Activated CD4-positive, alpha-beta memory T cell treated with anti-CD3 and anti-CD28 coated beads for 36 hours (primary cell): ENCODE measurements at regions of chr11 and their contacts with region 1.

Region 1: GRCh38 chr11:33161120-33162005 is at the start of gene CSTF3:
- DNase-seq: peak; percentile 99
- H3K4me3 Mint-ChIP-seq: peak within 1 kb of the TSS; percentile 99
- H3K27ac Mint-ChIP-seq: peak within 1 kb of the TSS; percentile 95
- H3K4me1 Mint-ChIP-seq: peaks cover 40% of the 10 kb centered on the region
- H3K27me3 Mint-ChIP-seq: no peaks in the 10 kb centered on the region
- total RNA-seq, gene CSTF3: 31.7 to 33.7 TPM

Region 2: GRCh38 chr11:31369348-31370329 is 1791.7 kb before region 1 on chr11 and contains the starts of genes DCDC1 and DNAJC24:
- CTCF ChIA-PET with region 1: no interaction called
- POLR2A ChIA-PET with region 1: no interaction called
- intact Hi-C with region 1: loop called (anchors 5 kb)
- DNase-seq: peak; percentile 95
- H3K4me3 Mint-ChIP-seq: peak within 1 kb of the TSS; percentile 85
- H3K27ac Mint-ChIP-seq: peak within 1 kb of the TSS; percentile 83
- H3K4me1 Mint-ChIP-seq: peaks cover 55% of the 10 kb centered on the region
- H3K27me3 Mint-ChIP-seq: no peaks in the 10 kb centered on the region
- total RNA-seq, gene DCDC1: 0.21 to 0.27 TPM
- total RNA-seq, gene DNAJC24: 15.4 to 16.8 TPM

Region 3: DNA sequence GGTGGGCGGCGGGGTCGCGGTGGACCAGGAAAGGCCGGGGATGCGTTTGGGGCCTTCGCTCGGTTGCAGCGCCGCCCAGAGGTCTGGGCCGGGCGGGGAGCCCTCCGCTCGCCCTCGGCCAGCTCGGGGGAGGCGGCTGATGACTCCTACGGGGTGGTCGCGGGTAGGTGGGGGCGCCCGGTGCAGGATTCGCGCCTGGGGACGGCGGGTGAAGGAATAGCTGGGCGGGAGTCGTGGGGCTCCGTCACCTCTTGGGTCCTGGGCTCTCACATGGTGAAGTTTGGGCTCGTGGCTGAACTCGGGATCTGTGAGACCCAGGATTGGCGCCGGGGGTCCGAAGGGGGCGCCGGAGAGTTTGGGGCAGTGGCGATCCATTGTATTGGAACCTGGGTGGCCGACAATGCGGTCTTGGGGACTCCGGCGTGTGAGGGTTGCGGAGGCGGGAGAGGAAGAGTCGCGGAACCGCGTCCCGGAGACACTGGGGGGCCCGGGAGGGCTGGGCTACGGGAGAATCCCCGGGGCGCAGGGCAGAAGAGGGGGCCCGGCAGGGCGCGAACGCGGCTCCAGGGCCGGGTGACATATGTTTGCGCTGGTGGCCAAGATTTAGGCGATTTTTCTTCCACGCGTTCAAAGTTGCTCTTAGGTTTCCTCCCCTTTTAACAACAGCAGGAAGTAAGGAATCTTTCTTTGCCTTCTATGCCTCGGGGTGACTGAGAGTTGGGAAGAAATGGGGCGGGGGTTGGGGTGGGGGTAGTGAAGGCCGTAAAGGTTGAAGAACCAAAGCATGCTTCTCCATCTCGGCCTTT is 267.8 kb before region 1 on chr11:
- CTCF ChIA-PET with region 1: no interaction called
- POLR2A ChIA-PET with region 1: interaction called, 3 read pairs
- intact Hi-C with region 1: loop called (anchors 5 kb)
- DNase-seq: peak; percentile 68
- H3K4me3 Mint-ChIP-seq: peak overlapping the region; percentile 97
- H3K27ac Mint-ChIP-seq: peak overlapping the region; percentile 90
- H3K4me1 Mint-ChIP-seq: peaks cover 32% of the 10 kb centered on the region
- H3K27me3 Mint-ChIP-seq: no peaks in the 10 kb centered on the region

Region 4: DNA sequence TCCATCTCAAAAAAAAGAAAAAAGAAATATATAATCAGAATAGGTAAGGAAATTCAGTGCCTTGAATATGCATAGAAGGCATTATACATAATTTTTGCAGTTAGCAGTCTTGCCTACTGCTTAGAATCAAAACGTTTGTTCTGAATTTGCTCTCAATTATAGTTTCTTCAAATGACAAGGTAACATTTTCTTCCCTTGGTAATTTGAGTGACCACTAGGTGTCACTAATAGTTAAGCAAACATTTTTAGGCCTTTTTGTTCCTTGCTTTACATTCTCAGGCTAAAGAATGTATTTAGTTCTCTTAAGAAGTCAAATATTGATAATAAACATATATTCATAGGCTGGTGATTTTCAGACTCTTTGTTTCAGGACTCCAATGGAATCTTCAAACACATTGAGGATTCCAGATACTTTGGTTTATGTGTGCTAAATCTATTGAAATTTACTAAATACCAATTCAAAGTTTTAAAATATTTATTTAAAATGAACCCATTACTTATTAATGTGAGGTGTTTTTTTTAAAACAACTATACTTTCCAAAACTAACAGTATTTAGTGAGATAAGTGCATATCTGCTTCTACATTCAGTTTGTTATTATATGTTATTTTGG is 200.7 kb before region 1 on chr11:
- CTCF ChIA-PET with region 1: no interaction called
- POLR2A ChIA-PET with region 1: no interaction called
- intact Hi-C with region 1: loop called (anchors 5 kb)
- DNase-seq: no peak
- H3K4me3 Mint-ChIP-seq: no peak overlapping the region
- H3K27ac Mint-ChIP-seq: no peak overlapping the region
- H3K4me1 Mint-ChIP-seq: peaks cover 9% of the 10 kb centered on the region
- H3K27me3 Mint-ChIP-seq: no peaks in the 10 kb centered on the region

Region 5: DNA sequence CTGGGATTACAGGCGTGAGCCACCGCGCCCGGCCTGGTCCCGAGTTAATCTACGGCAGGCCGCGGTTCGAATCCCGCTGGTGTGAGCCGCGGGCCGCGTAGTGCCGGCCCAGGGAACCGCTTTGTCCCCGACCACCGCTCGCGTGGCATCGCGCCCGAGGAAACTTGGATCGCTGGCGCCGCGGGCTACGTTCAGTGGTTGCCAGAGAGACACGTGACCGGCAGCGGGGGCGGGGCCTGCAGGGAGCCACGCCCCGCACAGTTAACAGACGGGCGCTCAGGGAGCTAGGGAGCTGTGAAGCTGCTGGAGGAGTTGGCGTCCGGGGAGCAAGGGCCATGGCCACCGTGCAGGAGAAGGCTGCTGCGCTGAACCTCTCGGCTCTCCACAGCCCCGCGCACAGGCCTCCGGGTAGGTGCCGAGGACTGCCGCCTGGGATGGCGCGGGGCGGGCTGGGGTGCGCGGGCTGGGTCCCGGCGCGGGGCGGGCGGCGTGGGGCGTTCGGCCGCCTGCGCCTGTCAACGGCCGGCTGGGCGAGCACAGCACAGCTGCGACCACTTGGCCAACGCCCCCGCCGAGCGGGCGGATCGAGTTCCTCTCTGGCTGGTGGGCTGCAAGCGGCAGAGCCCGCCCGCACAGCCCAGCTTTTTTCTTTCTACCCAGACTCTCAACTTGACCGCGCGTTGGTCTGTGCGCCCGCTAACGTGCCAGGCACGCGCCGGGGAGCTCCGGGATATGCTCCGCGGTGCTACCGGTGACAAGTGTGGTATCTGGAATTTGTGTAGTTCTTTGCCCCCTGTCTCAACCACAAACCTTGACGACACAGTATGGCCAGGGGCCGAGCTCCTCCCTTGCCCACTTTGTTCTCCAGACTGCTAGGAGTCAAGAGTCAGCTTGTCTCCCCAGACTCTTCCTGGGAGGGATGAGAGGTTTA is 145.5 kb before region 1 on chr11 and contains the start of gene DEPDC7:
- CTCF ChIA-PET with region 1: no interaction called
- POLR2A ChIA-PET with region 1: interaction called, 4 read pairs
- intact Hi-C with region 1: loop called (anchors 10 kb)
- DNase-seq: peak; percentile 83
- H3K4me3 Mint-ChIP-seq: peak within 1 kb of the TSS; percentile 75
- H3K27ac Mint-ChIP-seq: no peak within 1 kb of the TSS
- H3K4me1 Mint-ChIP-seq: peaks cover 33% of the 10 kb centered on the region
- H3K27me3 Mint-ChIP-seq: peaks cover 29% of the 10 kb centered on the region
- total RNA-seq, gene DEPDC7: 0.86 to 0.90 TPM

Region 6: DNA sequence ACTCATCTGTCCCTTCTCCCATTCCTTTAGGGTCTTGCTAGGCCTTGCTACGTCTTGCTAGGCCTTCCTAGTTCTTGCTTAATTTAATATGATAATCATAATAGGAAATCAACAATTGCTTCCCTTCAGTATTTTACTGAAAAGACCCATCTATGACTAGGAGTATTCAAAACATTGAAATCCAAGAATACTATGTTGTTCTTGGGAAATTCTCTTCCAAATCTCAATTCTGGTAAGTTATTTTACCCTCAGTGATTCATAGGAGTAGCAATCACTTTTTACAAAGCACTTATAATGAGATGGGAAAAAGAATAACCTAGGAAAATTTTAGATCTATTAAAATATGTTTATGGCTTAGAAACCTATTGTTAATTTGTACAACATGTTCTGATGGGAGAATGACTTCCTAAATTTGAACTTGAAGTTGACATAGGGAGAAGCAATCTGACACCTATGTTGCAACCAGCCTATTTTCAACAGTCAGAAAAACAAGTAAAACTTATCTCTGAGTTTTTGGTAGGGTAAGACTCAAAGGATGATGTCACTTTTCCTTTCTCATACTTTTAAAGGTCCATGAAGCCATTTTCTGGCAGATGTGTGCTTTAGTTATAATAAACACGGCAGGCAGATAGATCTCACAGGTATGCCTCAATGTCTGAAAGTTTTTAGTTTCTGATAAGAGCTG is 66.4 kb after region 1 on chr11:
- CTCF ChIA-PET with region 1: no interaction called
- POLR2A ChIA-PET with region 1: no interaction called
- intact Hi-C with region 1: no loop called
- DNase-seq: no peak
- H3K4me3 Mint-ChIP-seq: no peak overlapping the region
- H3K27ac Mint-ChIP-seq: no peak overlapping the region
- H3K4me1 Mint-ChIP-seq: no peaks in the 10 kb centered on the region
- H3K27me3 Mint-ChIP-seq: no peaks in the 10 kb centered on the region

Region 7: GRCh38 chr11:33329705-33330329 is 168.5 kb after region 1 on chr11:
- CTCF ChIA-PET with region 1: interaction called, 50 read pairs
- POLR2A ChIA-PET with region 1: no interaction called
- intact Hi-C with region 1: loop called (anchors 1 kb)
- DNase-seq: peak; percentile 55
- H3K4me3 Mint-ChIP-seq: no peak overlapping the region
- H3K27ac Mint-ChIP-seq: no peak overlapping the region
- H3K4me1 Mint-ChIP-seq: peaks cover 14% of the 10 kb centered on the region
- H3K27me3 Mint-ChIP-seq: no peaks in the 10 kb centered on the region